Activated naive CD4-positive, alpha-beta T cell treated with anti-CD3 and anti-CD28 coated beads, Interleukin-2, amount 10 ng/mL, durations not matched to agents 7 days and 5 days (primary cell): ENCODE measurements at regions of chr3 and their contacts with region 1.

Region 1: DNA sequence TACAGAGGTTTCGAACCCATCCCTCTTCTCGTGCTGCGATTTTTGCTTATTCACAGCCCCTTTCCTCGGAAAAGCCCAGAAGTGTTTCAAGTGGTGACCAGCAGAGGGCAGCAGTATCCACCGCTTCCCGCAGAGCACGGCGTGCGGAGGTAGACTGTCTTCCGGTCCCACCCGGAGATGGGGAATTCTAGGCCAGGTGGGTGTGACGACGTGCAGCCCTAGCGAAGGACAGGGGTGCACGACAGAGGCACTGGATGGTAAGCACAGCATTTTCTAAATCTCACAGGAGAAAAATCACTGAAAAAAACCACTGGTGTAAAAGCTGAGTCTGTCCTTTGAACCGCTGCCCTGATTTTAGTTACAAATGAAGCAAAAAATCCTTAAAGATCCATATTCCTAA is 7.4 kb upstream of the PSMD6 start:
- DNase-seq: peak; percentile 79
- H3K4me3 Mint-ChIP-seq: peak overlapping the region; percentile 56
- H3K27ac Mint-ChIP-seq: peak overlapping the region; percentile 53
- H3K4me1 Mint-ChIP-seq: peaks cover 6% of the 10 kb centered on the region
- H3K27me3 Mint-ChIP-seq: peaks cover 32% of the 10 kb centered on the region

Region 2: DNA sequence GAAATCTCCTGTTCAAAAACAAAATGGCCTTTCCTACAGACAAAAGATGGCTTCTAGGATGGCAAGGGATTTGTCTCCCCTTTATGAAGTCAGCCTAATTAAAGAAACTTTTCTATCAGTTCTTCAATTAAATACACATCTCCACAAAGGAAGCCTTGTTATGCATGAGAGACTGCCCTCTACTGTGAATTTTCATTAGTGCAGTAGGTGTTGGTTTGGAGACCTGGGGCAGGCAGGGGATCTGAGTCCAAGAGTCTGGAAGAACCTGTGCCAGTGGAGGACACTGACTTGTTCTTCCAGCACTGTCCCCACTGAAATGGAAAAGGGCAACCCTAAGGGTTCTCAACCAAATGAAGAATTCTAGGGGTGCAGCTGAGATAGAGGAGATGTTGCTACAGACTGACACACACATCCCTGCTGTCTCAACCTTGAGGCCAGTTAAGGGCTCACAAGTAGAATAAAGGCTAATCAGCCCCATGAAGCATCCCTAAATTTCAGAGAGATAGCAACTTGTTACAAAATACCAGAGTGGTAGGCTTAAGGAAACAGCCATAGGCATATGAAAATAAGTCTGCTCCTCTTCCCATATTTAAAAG is 368.6 kb after region 1 on chr3:
- CTCF ChIA-PET with region 1: interaction called, 15 read pairs
- DNase-seq: peak; percentile 23
- H3K4me3 Mint-ChIP-seq: no peak overlapping the region
- H3K27ac Mint-ChIP-seq: no peak overlapping the region
- H3K4me1 Mint-ChIP-seq: no peaks in the 10 kb centered on the region
- H3K27me3 Mint-ChIP-seq: peaks cover 4% of the 10 kb centered on the region

Region 3: DNA sequence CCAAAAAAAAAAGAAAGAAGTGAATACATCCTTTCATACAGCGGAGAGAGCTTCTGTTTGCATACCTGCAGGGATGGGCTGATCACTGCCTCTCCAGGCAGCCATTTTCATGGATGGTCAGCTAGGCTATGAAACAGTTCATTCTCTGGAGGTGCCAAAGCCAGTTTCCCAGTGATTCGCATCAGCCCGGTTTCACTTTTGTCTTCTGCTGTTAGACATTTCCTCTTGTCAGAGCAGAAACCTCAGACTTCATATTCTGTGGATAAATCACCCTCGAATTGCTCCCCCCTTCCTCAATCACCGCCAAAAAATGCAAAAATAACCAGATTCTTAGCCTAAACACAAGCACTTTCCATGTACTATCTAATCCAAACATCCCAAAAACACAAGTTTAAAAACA is 431.5 kb after region 1 on chr3:
- CTCF ChIA-PET with region 1: interaction called, 15 read pairs
- DNase-seq: no peak
- H3K4me3 Mint-ChIP-seq: no peak overlapping the region
- H3K27ac Mint-ChIP-seq: no peak overlapping the region
- H3K4me1 Mint-ChIP-seq: no peaks in the 10 kb centered on the region
- H3K27me3 Mint-ChIP-seq: no peaks in the 10 kb centered on the region

Region 4: DNA sequence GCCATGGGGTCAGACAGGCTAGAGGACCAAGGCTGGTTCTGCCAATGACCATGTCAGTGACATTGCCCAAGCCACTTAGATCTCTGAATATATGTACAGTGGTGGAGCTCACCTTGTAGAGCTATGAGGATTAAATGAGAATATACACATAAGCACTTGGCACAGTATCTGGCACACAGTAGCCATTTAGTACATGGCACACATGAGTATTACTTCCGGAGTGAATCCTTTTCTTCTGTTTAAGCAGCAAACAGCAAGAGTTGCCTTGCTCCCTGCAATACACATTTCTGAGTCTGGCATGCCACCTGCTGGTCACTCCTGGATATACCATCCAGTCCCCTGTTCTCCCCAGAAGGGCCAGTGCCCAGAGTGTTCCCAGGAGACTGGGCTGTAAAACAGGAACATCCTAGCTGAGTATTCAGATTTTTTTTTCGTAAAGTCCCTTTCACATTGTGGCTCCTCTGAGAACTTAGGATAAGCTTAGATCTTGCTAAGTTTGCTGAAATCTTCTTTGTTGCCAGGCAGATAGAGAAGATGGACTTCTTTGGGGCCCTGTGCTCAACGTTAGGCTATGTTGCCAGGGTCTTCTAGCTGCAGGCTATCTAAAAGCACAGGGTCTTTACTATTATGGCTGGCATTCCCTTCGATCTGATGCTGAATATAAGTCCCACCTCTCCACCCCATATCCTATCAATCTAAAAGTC is 453.7 kb after region 1 on chr3:
- CTCF ChIA-PET with region 1: interaction called, 32 read pairs
- DNase-seq: peak; percentile 80
- H3K4me3 Mint-ChIP-seq: no peak overlapping the region
- H3K27ac Mint-ChIP-seq: no peak overlapping the region
- H3K4me1 Mint-ChIP-seq: peaks cover 5% of the 10 kb centered on the region
- H3K27me3 Mint-ChIP-seq: peaks cover 19% of the 10 kb centered on the region